ENCODE measurements at regions of chr9 and their contacts with region 1.

Region 1: GRCh38 chr9:85610074-85610860 is 131.5 kb downstream of the AGTPBP1 start:
- DNase-seq: peak; percentile 78
- H3K4me3 Mint-ChIP-seq: peak overlapping the region; percentile 69
- H3K27ac Mint-ChIP-seq: peak overlapping the region; percentile 61
- H3K4me1 Mint-ChIP-seq: peaks cover 6% of the 10 kb centered on the region
- H3K27me3 Mint-ChIP-seq: no peaks in the 10 kb centered on the region
- CTCF ChIP-seq: peak; percentile 61

Region 2: DNA sequence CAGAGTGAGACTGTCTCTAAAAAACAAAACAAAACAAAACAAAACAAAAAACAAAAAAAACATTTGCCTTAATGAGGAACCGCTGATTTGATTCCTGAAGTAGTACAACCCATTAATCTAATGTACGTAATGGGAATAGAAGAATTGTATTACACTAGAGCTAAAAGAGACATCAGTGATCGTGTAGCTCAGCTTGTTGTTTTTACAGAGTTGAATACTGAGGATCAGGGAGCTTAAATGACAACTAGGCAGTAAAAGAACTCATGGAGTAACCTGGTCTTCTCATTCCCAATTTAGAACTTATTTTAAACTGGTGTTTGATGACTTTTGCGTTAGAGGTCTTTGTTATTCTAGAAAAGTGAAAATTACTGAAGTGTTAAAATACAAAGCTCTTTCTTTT is 1204.6 kb before region 1 on chr9:
- CTCF ChIA-PET with region 1: interaction called, 10 read pairs
- POLR2A ChIA-PET with region 1: no interaction called
- intact Hi-C with region 1: no loop called
- DNase-seq: no peak
- H3K4me3 Mint-ChIP-seq: no peak overlapping the region
- H3K27ac Mint-ChIP-seq: no peak overlapping the region
- H3K4me1 Mint-ChIP-seq: no peaks in the 10 kb centered on the region
- H3K27me3 Mint-ChIP-seq: no peaks in the 10 kb centered on the region
- CTCF ChIP-seq: no peak

Region 3: GRCh38 chr9:85425153-85425611 is 185.1 kb before region 1 on chr9:
- CTCF ChIA-PET with region 1: no interaction called
- POLR2A ChIA-PET with region 1: no interaction called
- intact Hi-C with region 1: loop called (anchors 5 kb)
- DNase-seq: peak; percentile 72
- H3K4me3 Mint-ChIP-seq: no peak overlapping the region
- H3K27ac Mint-ChIP-seq: no peak overlapping the region
- H3K4me1 Mint-ChIP-seq: peaks cover 5% of the 10 kb centered on the region
- H3K27me3 Mint-ChIP-seq: peaks cover 17% of the 10 kb centered on the region
- CTCF ChIP-seq: peak; percentile 78

Region 4: DNA sequence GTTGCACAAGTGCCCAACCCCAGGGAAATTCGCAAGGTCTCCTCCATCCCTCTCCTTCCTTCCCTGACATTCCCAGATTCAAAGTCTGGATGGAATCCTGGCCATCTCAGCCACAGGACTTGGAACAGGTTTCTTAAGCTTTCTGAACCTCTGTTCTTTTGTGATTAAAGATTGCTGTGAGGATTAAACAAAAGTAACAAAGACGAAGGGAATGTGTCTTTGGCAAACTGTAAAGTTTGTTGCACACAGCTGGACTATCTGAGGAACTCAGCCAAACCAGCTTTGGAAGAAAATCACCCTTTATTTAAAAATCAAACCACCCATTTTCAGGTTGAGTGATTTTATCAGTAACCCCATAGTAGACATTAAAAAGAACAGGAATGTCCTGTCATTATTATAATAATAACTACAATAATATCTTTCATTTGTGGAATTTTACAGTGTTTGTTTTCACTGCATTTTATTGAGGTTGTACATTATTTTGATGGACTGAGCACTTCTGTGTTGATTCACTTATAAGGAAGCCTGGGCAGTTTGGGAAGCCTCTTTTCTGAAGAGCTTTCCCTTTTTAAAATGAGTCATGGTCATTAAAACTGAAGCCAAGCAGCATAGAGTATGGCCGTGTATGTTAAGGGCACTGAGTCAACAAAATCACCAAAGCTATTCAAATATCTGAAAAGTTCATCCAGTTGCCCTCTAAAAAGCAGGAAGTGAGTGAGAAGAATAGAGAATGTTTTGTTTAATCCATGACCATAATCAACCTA is 178.7 kb before region 1 on chr9:
- CTCF ChIA-PET with region 1: interaction called, 10 read pairs
- POLR2A ChIA-PET with region 1: no interaction called
- intact Hi-C with region 1: loop called (anchors 5 kb)
- DNase-seq: peak; percentile 13
- H3K4me3 Mint-ChIP-seq: no peak overlapping the region
- H3K27ac Mint-ChIP-seq: no peak overlapping the region
- H3K4me1 Mint-ChIP-seq: no peaks in the 10 kb centered on the region
- H3K27me3 Mint-ChIP-seq: peaks cover 42% of the 10 kb centered on the region
- CTCF ChIP-seq: no peak

Region 5: GRCh38 chr9:85508616-85509015 is 101.7 kb before region 1 on chr9:
- CTCF ChIA-PET with region 1: interaction called, 8 read pairs
- POLR2A ChIA-PET with region 1: interaction called, 3 read pairs
- intact Hi-C with region 1: loop called (anchors 1 kb)
- DNase-seq: peak; percentile 59
- H3K4me3 Mint-ChIP-seq: no peak overlapping the region
- H3K27ac Mint-ChIP-seq: no peak overlapping the region
- H3K4me1 Mint-ChIP-seq: peaks cover 14% of the 10 kb centered on the region
- H3K27me3 Mint-ChIP-seq: peaks cover 35% of the 10 kb centered on the region
- CTCF ChIP-seq: no peak

Measured in MCF 10A (cell line).